ENCODE measurements at regions of chr1 and their contacts with region 1.

Region 1: GRCh38 chr1:6245086-6245868 is 1.3 kb downstream of the HES3 start:
- DNase-seq: peak; percentile 78
- ATAC-seq: peak; percentile 84
- H3K4me3 Mint-ChIP-seq: no peak overlapping the region
- H3K27ac Mint-ChIP-seq: no peak overlapping the region
- H3K4me1 Mint-ChIP-seq: peaks cover 15% of the 10 kb centered on the region
- H3K27me3 Mint-ChIP-seq: peaks cover 40% of the 10 kb centered on the region
- CTCF ChIP-seq: no peak

Region 2: GRCh38 chr1:4485398-4485797 is 1759.9 kb before region 1 on chr1:
- CTCF ChIA-PET with region 1: no interaction called
- POLR2A ChIA-PET with region 1: no interaction called
- intact Hi-C with region 1: no loop called
- DNase-seq: no peak
- ATAC-seq: no peak
- H3K4me3 Mint-ChIP-seq: no peak overlapping the region
- H3K27ac Mint-ChIP-seq: no peak overlapping the region
- H3K4me1 Mint-ChIP-seq: peaks cover 4% of the 10 kb centered on the region
- H3K27me3 Mint-ChIP-seq: peaks cover 8% of the 10 kb centered on the region
- CTCF ChIP-seq: no peak

Region 3: GRCh38 chr1:5514519-5515183 is 730.6 kb before region 1 on chr1:
- CTCF ChIA-PET with region 1: no interaction called
- POLR2A ChIA-PET with region 1: no interaction called
- intact Hi-C with region 1: loop called (anchors 10 kb)
- DNase-seq: peak; percentile 56
- ATAC-seq: peak; percentile 52
- H3K4me3 Mint-ChIP-seq: no peak overlapping the region
- H3K27ac Mint-ChIP-seq: no peak overlapping the region
- H3K4me1 Mint-ChIP-seq: no peaks in the 10 kb centered on the region
- H3K27me3 Mint-ChIP-seq: peaks cover 22% of the 10 kb centered on the region
- CTCF ChIP-seq: peak; percentile 100

Region 4: DNA sequence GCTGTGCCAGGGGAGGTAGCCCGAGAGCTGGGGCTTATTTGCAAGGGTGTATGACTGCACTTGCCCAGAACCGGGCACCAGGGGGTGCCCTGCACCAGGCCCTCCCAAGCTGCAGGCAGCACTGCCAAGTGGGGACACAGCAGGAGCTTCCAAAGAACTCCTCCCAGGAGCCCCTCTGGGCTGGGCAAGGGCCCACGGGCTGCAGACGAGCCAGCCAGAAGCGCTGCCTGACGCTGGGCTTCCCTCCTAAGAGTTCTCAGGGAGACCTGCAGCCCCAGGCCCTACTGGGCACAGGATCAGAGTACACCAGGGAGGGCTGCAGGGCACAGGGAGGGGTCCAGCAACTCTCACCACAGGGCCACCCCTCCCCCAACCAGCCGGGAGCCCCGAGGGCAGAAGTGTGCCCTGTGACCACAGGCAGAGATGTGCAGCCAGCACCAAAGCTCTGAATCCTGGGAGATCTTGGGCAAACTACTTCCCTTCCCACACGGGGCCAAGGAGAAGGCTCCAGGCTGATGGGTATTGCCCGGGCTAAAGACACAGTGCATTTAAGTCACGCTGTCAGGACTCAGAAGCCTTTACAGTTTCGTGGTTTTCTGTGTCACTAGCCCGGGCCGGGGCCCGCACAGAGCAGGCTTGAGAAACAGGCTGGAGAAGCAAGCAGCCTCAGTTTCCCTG is 136.2 kb before region 1 on chr1:
- CTCF ChIA-PET with region 1: interaction called, 6 read pairs
- POLR2A ChIA-PET with region 1: no interaction called
- intact Hi-C with region 1: loop called (anchors 2 kb)
- DNase-seq: no peak
- ATAC-seq: peak; percentile 49
- H3K4me3 Mint-ChIP-seq: no peak overlapping the region
- H3K27ac Mint-ChIP-seq: no peak overlapping the region
- H3K4me1 Mint-ChIP-seq: no peaks in the 10 kb centered on the region
- H3K27me3 Mint-ChIP-seq: peaks cover 5% of the 10 kb centered on the region
- CTCF ChIP-seq: no peak

Region 5: GRCh38 chr1:6137758-6138157 is 107.5 kb before region 1 on chr1:
- CTCF ChIA-PET with region 1: no interaction called
- POLR2A ChIA-PET with region 1: no interaction called
- intact Hi-C with region 1: no loop called
- DNase-seq: no peak
- ATAC-seq: no peak
- H3K4me3 Mint-ChIP-seq: no peak overlapping the region
- H3K27ac Mint-ChIP-seq: no peak overlapping the region
- H3K4me1 Mint-ChIP-seq: no peaks in the 10 kb centered on the region
- H3K27me3 Mint-ChIP-seq: peaks cover 6% of the 10 kb centered on the region
- CTCF ChIP-seq: no peak

Region 6: GRCh38 chr1:6222636-6223035 is 22.6 kb before region 1 on chr1:
- CTCF ChIA-PET with region 1: no interaction called
- POLR2A ChIA-PET with region 1: no interaction called
- intact Hi-C with region 1: no loop called
- DNase-seq: no peak
- ATAC-seq: no peak
- H3K4me3 Mint-ChIP-seq: no peak overlapping the region
- H3K27ac Mint-ChIP-seq: no peak overlapping the region
- H3K4me1 Mint-ChIP-seq: no peaks in the 10 kb centered on the region
- H3K27me3 Mint-ChIP-seq: peaks cover 6% of the 10 kb centered on the region
- CTCF ChIP-seq: no peak

Region 7: DNA sequence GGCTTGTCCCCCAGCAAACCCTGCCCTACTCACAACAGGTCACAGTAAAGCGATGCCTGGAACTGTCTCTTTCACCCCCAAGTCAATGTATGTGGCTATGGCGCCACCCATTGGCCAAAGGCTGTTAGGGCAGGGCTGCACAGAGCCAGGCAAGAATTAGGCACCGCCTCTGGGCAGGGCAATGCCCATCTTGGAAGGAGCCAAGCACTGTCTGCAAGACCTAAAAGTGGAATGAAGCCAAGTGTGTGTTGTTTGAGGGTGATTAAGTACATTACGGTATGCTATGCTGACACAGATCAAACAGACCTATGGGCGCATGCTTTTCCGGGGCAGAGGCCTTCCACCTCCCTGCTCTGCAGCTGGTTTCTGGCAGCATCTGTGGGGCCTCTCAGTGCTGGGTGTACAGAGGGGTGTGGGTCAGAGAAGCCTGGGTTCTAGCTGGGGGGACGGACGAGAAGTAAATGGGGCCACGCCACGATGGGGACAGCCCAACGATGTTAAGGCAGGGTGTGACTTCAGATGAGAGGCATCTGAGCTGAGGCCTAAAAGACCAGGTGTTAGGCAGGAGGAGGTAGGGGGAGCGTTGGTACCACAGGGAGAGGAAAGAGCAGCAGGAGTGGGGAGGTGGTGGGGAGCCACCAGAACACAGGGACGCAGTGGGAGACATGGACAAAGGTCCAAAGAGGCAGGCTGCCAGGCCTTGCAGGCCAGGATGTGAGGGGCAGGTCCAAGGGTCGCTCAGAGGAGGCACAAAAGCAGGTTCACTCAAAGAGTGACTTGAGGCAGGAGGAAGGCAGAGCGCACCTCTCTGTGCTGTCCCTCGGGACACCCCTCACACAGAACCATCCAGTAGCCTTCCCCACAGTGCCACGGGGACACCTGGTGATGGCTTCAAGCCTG is 98.5 kb after region 1 on chr1:
- CTCF ChIA-PET with region 1: interaction called, 6 read pairs
- POLR2A ChIA-PET with region 1: no interaction called
- intact Hi-C with region 1: loop called (anchors 1 kb)
- DNase-seq: peak; percentile 22
- ATAC-seq: peak; percentile 71
- H3K4me3 Mint-ChIP-seq: no peak overlapping the region
- H3K27ac Mint-ChIP-seq: no peak overlapping the region
- H3K4me1 Mint-ChIP-seq: peaks cover 7% of the 10 kb centered on the region
- H3K27me3 Mint-ChIP-seq: no peaks in the 10 kb centered on the region
- CTCF ChIP-seq: no peak

Region 8: DNA sequence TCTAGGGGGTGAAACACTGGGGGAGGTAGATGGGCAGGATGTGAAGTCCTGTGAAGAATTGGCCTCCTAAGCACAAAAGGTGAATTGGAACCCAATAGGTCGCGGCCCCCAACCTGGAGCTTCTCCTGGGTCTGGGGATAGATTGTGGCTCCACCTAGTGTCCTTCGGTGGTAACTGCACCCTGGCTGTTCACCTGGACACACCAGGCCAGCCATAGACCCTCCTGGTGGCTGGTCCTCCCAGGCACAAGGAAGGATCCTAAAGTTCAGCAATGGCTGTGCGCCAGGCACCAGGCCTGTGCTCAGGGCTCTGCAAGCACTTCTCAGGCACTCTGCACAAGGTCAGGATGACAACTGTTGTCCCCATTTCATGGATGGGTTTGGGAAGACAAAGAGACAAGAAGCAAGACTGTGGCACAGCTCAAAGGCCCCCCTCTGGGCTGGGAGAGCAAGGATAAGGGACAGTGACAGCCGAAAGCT is 192.8 kb after region 1 on chr1:
- CTCF ChIA-PET with region 1: interaction called, 16 read pairs
- POLR2A ChIA-PET with region 1: interaction called, 4 read pairs
- intact Hi-C with region 1: loop called (anchors 1 kb)
- DNase-seq: peak; percentile 57
- ATAC-seq: peak; percentile 59
- H3K4me3 Mint-ChIP-seq: no peak overlapping the region
- H3K27ac Mint-ChIP-seq: no peak overlapping the region
- H3K4me1 Mint-ChIP-seq: peaks cover 7% of the 10 kb centered on the region
- H3K27me3 Mint-ChIP-seq: peaks cover 44% of the 10 kb centered on the region
- CTCF ChIP-seq: peak; percentile 68

Region 9: GRCh38 chr1:6646499-6647148 is 401.3 kb after region 1 on chr1:
- CTCF ChIA-PET with region 1: no interaction called
- POLR2A ChIA-PET with region 1: no interaction called
- intact Hi-C with region 1: loop called (anchors 10 kb)
- DNase-seq: no peak
- ATAC-seq: peak; percentile 49
- H3K4me3 Mint-ChIP-seq: no peak overlapping the region
- H3K27ac Mint-ChIP-seq: no peak overlapping the region
- H3K4me1 Mint-ChIP-seq: peaks cover 2% of the 10 kb centered on the region
- H3K27me3 Mint-ChIP-seq: no peaks in the 10 kb centered on the region
- CTCF ChIP-seq: peak; percentile 26

Region 10: GRCh38 chr1:7953850-7954609 is 1708.8 kb after region 1 on chr1:
- CTCF ChIA-PET with region 1: no interaction called
- POLR2A ChIA-PET with region 1: no interaction called
- intact Hi-C with region 1: no loop called
- DNase-seq: peak; percentile 83
- ATAC-seq: peak; percentile 90
- H3K4me3 Mint-ChIP-seq: peak overlapping the region; percentile 89
- H3K27ac Mint-ChIP-seq: peak overlapping the region; percentile 95
- H3K4me1 Mint-ChIP-seq: peaks cover 15% of the 10 kb centered on the region
- H3K27me3 Mint-ChIP-seq: no peaks in the 10 kb centered on the region
- CTCF ChIP-seq: no peak

Measured in activated B cell treated with CpG ODN at 0.5 μM for 24 hours (primary cell).